Astrocyte of the cerebellum (primary cell): ENCODE measurements at regions of chr7 and their contacts with region 1.

Region 1: DNA sequence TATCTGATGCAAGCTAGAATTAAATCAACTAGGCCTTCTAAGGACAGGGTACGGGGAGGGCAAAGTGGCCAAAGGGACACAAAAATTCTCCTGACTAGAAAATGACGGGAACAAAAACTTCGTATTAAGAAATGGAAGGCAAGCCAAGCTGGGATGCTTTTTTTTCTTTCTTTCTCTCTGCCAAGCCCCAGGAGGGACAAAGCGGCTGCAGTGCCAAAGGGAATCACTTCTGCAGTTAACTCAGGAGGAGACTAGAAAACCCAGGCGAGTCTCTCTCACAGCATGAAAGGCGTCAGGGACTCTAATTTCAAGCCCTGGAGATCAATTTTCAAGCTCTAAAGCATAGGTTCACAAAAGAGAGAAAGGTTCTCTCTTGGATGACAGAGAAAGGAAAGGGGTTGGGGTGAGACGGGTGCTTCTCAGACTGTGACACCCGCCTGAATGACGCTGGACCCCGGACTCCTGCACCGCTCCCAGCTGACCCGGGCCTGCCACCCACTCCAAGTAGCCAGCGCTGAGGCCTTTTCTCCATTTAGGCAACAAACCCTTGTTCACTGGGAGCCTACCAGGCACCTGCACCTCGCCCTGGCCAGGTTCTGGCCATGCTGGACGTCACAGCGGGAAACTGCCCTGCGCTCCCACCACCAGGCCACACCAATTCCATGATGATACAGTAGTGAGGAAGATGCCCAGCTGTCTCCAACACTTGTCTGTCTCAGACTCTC is 56.5 kb downstream of the KIAA1549 start:
- DNase-seq: no peak
- H3K4me3 ChIP-seq: no peak overlapping the region
- CTCF ChIP-seq: no peak

Region 2: DNA sequence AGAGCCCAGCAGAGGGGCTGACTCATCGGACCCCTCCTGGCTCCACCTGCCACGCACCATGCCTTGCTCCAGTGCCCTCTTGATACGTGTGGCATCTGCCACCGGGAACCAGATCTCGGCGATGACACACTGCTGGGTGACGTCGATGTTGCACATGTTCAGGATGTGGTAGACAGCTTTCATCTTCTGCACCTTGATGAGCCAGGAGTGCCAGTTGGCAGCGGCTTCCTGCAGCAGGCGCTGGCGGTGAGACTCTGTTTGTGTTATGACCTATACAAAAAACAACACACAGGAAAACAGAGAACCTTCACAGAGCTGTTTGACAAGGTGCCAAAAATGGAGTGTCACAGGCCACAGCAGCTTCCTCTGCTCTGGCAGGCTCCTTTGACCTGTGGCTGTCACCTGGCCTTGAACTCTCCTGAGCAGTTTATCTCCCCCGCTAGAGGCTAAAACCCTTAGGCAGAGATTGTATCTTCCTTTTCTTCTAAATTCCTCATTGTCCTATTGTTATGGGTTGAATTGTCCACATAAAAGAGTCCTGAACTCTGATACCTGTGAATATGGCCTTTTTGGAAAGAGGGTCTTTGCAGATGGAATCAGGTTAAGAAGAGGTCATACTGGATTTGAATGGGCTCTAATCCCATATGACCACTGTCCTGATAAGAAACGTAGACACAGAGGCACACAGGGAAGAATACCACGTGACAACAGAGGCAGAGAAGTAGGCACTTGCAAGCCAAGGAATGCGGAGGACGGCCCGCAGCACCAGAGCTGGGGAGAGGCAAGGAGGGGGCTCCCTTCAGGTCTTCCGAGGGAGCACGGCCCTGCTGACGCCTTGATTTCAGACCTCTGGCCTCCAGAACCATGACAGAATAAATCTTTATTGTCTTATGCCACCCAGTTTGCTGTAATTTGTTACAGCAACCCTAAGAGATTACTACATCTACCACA is 171.8 kb before region 1 on chr7:
- in situ Hi-C with region 1: no loop called
- DNase-seq: no peak
- H3K4me3 ChIP-seq: no peak overlapping the region
- CTCF ChIP-seq: no peak

Region 3: DNA sequence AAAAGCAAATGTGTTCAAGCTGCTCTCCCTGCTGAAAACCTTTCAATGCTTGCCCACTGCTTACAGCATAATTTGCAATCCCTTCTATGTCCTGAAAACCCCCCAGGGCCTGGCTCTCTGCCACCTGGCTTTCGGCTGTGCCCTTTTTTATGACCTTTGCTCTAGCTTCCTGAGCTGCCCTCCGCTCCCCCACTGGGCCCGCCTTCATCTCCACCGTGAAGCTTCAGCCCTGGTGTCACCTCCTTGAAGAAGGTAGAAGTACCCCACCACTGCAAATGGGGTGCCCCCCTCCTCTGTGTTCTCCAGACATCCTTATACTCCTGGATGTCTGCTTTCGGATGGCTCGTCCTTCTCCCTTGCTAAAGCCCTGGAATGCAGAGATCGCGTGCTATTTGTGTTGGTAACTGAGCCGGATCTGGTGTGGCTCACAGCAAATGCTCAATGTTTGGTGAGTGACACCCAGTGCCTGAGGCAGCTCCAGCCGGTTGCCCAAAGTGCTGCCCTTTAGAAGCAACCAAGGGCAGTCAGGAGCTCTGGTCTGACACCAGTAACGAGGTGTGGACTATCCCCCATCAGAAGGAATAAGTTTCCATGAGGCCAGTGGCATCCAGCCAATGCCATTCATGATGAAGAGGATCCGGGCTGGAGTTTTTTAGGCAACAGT is 33.7 kb before region 1 on chr7:
- in situ Hi-C with region 1: loop called (anchors 5 kb)
- DNase-seq: no peak
- H3K4me3 ChIP-seq: no peak overlapping the region
- CTCF ChIP-seq: no peak